Esophagus muscularis mucosa (tissue), 4 donors: ENCODE measurements at regions of chr15 and their contacts with region 1.

Region 1: DNA sequence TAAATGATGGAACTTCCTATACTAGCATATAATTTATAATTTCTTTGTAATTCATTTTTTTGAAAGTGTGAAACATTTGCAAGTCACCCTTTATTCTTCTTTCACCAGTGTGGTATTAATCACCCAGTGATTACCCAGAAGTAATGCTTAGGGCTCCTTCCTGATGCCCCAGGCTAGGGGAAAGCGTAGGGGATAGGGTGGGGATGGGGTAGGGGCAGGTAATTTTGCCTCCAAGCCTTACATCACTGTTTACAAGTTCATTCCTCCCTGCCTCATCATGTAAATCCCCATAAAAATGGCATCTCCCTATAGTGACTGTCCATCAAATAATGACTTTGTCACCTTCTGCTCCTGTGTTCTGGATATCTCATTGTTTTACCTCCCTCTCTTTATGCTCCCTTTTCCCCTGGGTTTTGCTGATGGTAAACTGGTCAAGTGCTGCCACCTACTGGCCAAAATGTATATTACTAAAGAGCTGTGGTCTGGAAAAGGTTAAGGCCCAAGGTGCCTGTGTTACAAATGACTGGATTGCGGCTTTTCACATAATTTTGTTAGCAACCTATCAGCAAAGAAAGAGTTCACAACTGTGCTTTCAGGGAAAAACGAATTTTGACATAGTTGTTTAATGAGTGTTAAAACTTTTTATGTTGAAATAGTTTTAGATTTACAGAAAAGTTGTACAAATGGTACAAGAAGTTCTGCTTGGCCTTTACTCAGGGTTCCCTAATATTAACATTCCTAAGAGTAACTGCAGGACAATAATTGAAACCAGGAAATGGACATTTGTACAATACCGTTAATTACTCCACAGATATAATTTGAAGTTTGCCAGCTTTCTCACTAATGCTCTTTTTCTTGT is 54.7 kb downstream of the ONECUT1 start:
- DNase-seq: peak; percentile 93
- H3K4me3 ChIP-seq: no peak overlapping the region
- H3K27ac ChIP-seq: no peak overlapping the region
- H3K4me1 ChIP-seq: peaks cover 0 to 20% (median 2%) of the 10 kb centered on the region in 4 donors
- H3K27me3 ChIP-seq: no peaks in the 10 kb centered on the region
- CTCF ChIP-seq: peak; percentile 74 to 84 (median 79)
- EP300 ChIP-seq: no peak
- POLR2A ChIP-seq: no peak

Region 2: DNA sequence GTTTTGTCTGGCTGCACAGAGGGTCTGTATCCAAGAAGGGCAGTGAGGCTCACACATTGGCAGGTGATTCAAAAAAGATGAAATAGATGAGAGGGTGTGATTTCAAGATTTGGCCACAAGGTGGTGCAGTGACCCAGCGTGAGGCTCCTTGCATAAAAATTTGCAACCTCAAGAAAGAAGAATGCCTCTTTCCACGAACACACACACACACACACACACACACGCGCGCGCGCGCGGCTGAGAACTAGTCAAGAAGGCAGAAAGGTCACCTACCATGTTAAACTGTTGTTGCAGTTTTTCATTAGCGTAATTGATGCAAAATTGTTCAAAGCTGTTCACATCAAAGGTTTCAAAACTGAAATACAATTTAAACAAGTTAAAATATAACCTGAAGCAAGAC is 479.1 kb before region 1 on chr15:
- intact Hi-C with region 1: loop called (anchors 2 kb)
- DNase-seq: peak; percentile 96
- H3K4me3 ChIP-seq: no peak overlapping the region
- H3K27ac ChIP-seq: no peak overlapping the region
- H3K4me1 ChIP-seq: peaks cover 17 to 22% (median 20%) of the 10 kb centered on the region in 4 donors
- H3K27me3 ChIP-seq: no peaks in the 10 kb centered on the region
- CTCF ChIP-seq: peak; percentile 78 to 81 (median 79)
- EP300 ChIP-seq: no peak
- POLR2A ChIP-seq: no peak

Region 3: DNA sequence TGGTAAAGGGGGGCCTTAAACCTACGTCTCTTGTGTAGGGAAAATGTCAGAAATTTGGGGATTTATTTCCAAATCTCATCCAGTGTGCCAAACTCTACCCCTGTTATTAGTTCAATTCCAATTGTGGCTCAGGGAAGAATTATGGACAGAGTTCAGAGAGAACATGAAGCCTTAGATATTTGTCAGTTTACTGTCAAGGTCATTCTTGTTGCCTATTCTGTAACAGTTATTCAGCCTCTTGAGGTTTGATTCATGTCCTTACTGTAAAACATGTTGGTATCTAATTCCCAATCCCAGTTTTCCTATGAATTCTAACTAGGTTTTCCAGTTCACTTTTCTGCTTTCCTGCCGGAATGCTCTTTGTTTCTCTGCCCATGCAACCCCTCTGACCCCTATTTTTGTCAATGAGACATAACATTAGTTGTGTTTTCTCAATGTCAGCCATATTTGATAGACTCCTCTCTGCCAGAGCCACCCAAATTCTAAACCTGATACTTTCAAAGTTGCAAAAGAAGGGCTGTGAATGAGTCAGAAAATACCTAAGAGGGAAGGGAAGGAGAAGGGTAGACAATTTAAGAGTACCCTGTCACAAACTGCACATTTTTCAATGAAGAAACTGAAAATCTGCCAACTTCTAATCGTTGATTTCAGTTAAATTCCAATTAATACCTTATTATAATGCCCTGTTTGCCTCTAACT is 108.6 kb before region 1 on chr15:
- intact Hi-C with region 1: loop called (anchors 10 kb)
- DNase-seq: no peak
- H3K4me3 ChIP-seq: no peak overlapping the region
- H3K27ac ChIP-seq: no peak overlapping the region
- H3K4me1 ChIP-seq: peaks cover 0 to 6% (median 3%) of the 10 kb centered on the region in 4 donors
- H3K27me3 ChIP-seq: no peaks in the 10 kb centered on the region
- CTCF ChIP-seq: no peak
- EP300 ChIP-seq: no peak
- POLR2A ChIP-seq: no peak

Region 4: GRCh38 chr15:53009093-53009492 is 273.6 kb after region 1 on chr15:
- intact Hi-C with region 1: no loop called
- DNase-seq: no peak
- H3K4me3 ChIP-seq: no peak overlapping the region
- H3K27ac ChIP-seq: no peak overlapping the region
- H3K4me1 ChIP-seq: no peaks in the 10 kb centered on the region
- H3K27me3 ChIP-seq: no peaks in the 10 kb centered on the region
- CTCF ChIP-seq: no peak
- EP300 ChIP-seq: no peak
- POLR2A ChIP-seq: no peak